Activated CD8-positive, alpha-beta T cell treated with anti-CD3 and anti-CD28 coated beads for 36 hours (primary cell): ENCODE measurements at regions of chr3 and their contacts with region 1.

Region 1: GRCh38 chr3:169966428-169966950 is at the start of gene SEC62:
- DNase-seq: peak; percentile 95
- ATAC-seq: peak; percentile 84
- H3K4me3 Mint-ChIP-seq: peak within 1 kb of the TSS; percentile 85
- H3K27ac Mint-ChIP-seq: peak within 1 kb of the TSS; percentile 97
- H3K4me1 Mint-ChIP-seq: peaks cover 57% of the 10 kb centered on the region
- H3K27me3 Mint-ChIP-seq: no peaks in the 10 kb centered on the region
- CTCF ChIP-seq: no peak
- total RNA-seq, gene SEC62: 52.5 to 60.2 TPM

Region 2: DNA sequence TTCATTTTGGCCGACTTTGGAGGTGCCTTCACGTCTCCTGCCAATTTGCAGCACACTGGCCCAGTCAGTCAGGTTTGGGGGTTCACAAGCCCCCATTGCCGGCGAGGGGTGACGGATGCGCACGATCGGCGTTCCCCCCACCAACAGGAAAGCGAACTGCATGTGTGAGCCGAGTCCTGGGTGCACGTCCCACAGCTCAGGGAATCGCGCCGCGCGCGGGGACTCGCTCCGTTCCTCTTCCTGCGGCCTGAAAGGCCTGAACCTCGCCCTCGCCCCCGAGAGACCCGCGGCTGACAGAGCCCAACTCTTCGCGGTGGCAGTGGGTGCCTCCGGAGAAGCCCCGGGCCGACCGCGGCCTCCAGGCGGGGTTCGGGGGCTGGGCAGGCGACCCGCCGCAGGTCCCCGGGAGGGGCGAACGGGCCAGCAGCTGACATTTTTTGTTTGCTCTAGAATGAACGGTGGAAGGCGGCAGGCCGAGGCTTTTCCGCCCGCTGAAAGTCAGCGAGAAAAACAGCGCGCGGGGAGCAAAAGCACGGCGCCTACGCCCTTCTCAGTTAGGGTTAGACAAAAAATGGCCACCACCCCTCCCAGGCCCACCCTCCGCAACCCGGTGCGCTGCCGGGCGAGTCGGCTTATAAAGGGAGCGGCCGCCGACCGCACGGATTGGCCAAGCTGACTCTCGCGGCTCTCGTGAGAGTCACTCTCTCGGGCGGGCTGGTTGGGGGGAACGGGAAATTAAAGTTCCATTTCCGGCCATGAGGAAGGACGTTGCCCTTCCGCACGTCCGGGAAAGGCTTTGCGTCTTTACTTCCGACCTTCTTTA is 201.8 kb before region 1 on chr3 and contains the start of gene TERC:
- CTCF ChIA-PET with region 1: interaction called, 4 read pairs
- POLR2A ChIA-PET with region 1: interaction called, 7 read pairs
- intact Hi-C with region 1: loop called (anchors 5 kb)
- DNase-seq: peak; percentile 96
- ATAC-seq: peak; percentile 86
- H3K4me3 Mint-ChIP-seq: peak within 1 kb of the TSS; percentile 96
- H3K27ac Mint-ChIP-seq: peak within 1 kb of the TSS; percentile 99
- H3K4me1 Mint-ChIP-seq: peaks cover 24% of the 10 kb centered on the region
- H3K27me3 Mint-ChIP-seq: no peaks in the 10 kb centered on the region
- CTCF ChIP-seq: no peak
- total RNA-seq, gene TERC: 21.7 to 29.0 TPM

Region 3: DNA sequence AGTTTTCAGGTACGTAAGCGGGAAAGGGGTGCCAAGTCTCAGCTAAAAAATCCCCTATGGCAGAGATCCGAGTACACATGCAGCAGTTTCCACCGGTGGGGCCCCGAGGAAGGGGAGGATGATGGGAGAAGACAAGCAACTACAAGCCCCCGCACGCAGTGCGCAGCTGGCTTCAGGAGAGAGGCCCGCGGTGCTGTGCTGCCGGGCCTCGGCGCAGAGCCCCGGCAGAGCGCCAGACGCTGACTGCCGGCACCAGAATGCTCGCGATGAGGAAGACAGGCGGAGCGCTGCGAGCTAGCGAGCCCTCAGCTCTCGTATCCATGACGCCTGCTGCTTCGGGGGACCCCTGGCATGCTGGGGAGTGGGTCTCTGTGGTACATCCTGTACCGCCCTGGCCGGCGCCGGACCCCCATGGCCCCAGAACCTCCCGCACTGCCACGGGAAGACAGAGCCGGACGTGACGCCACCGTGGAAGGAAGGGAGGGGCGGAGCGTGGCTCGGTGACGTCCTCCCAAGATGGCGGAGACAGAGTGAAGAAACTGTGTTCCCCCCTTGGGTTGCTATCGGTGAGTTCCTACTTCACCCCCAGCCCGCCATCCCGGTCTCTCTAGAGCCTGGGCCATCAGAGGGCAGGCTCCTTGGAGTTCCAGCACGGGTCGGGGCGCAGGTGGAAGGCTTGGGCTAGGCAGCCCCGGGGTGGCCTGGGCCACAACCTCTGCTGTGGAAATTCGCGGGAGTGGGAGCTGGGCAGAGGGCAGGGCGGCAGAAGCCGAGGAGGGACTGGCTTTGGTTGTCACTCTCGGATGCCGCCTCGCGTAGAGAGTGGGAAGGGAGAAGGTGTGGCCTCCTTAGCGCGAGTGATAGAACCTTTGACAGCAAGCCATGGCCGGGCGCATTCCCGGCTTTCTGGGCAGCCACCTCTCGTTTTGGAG is 193.3 kb before region 1 on chr3 and contains the start of gene MYNN:
- CTCF ChIA-PET with region 1: interaction called, 3 read pairs
- POLR2A ChIA-PET with region 1: interaction called, 16 read pairs
- intact Hi-C with region 1: no loop called
- DNase-seq: peak; percentile 95
- ATAC-seq: peak; percentile 81
- H3K4me3 Mint-ChIP-seq: peak within 1 kb of the TSS; percentile 94
- H3K27ac Mint-ChIP-seq: peak within 1 kb of the TSS; percentile 99
- H3K4me1 Mint-ChIP-seq: peaks cover 31% of the 10 kb centered on the region
- H3K27me3 Mint-ChIP-seq: no peaks in the 10 kb centered on the region
- CTCF ChIP-seq: no peak
- total RNA-seq, gene MYNN: 13.8 to 14.1 TPM

Region 4: DNA sequence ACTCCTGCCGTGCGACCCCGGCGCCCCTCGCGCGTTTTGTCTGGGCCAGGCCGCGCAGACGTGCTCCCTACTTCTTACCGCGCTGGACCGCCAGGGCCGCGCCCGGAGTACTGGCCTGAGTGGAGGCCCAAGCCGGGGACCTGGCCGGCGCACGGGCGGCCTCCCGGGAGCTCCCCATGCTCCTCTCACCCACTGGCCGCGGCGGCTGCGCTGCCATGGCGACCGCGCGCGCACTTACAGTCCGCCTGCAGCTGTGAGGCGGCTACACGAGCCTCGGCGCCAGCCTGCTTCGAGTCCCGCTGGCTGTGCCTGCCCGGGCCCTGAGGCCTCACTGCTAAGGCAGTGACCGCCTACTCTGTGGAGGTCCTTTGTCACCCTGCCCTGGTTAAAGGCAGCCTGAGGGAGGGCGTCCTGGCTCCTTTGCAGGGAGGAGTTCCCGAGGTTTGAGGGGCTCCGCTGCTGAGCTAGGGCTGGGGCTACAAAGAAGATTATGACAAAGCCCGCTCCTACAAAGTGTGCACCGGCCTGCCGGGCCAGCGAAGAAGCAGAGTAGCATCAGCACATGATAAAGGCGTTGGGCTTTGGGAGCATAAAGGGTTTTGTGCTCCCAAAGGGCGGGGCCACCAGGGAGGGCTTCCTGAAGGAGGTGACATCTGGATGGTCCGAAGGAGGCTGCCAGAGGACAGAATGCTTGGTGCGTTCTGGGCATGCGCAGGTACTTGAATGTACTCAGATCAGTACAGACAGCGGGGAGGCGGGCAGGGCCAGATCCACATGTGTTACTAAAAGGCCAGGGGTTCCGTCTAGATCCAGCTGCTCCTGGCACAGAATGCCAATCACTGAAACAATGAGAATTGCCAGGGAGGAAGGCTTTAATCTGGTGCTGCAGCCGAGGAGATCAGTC is 153.9 kb before region 1 on chr3 and contains the starts of genes LRRC34 and LRRIQ4:
- CTCF ChIA-PET with region 1: interaction called, 4 read pairs
- POLR2A ChIA-PET with region 1: interaction called, 4 read pairs
- intact Hi-C with region 1: loop called (anchors 5 kb)
- DNase-seq: peak; percentile 93
- ATAC-seq: peak; percentile 66
- H3K4me3 Mint-ChIP-seq: peak within 1 kb of the TSS; percentile 81
- H3K27ac Mint-ChIP-seq: peak within 1 kb of the TSS; percentile 92
- H3K4me1 Mint-ChIP-seq: peaks cover 24% of the 10 kb centered on the region
- H3K27me3 Mint-ChIP-seq: no peaks in the 10 kb centered on the region
- CTCF ChIP-seq: no peak
- total RNA-seq, gene LRRC34: 6.6 to 6.8 TPM
- total RNA-seq, gene LRRIQ4: 0.18 TPM in 1 of 2 experiments, not detected in the other

Region 5: GRCh38 chr3:169863458-169863899 is 103.0 kb before region 1 on chr3:
- CTCF ChIA-PET with region 1: interaction called, 14 read pairs
- POLR2A ChIA-PET with region 1: no interaction called
- intact Hi-C with region 1: loop called (anchors 5 kb)
- DNase-seq: peak; percentile 78
- ATAC-seq: peak; percentile 56
- H3K4me3 Mint-ChIP-seq: no peak overlapping the region
- H3K27ac Mint-ChIP-seq: no peak overlapping the region
- H3K4me1 Mint-ChIP-seq: peaks cover 19% of the 10 kb centered on the region
- H3K27me3 Mint-ChIP-seq: peaks cover 6% of the 10 kb centered on the region
- CTCF ChIP-seq: peak; percentile 95

Region 6: DNA sequence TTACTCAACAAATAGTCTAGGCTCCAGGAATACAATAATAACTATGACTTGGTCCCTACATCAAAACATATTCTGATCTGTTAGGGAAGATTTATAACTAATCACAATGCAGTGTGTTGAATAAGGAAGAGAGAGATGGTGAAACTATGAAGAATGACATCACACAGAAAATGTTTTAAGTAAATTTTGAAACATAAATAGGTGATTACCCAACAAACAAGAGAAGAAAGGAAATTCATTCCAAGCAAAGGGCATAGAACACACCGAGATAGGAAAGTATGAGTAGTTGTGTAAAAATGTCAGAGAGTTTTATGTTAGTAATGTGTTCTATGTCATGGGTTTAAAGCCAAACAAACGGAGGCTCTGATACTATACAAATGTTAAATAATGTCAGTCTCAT is 13.6 kb after region 1 on chr3:
- CTCF ChIA-PET with region 1: interaction called, 17 read pairs
- POLR2A ChIA-PET with region 1: interaction called, 20 read pairs
- intact Hi-C with region 1: no loop called
- DNase-seq: no peak
- ATAC-seq: no peak
- H3K4me3 Mint-ChIP-seq: no peak overlapping the region
- H3K27ac Mint-ChIP-seq: peak overlapping the region; percentile 29
- H3K4me1 Mint-ChIP-seq: peaks cover 9% of the 10 kb centered on the region
- H3K27me3 Mint-ChIP-seq: no peaks in the 10 kb centered on the region
- CTCF ChIP-seq: no peak